ENCODE measurements at regions of chr2 and their contacts with region 1.

Region 1: GRCh38 chr2:60966507-60967405 is 50.8 kb upstream of the PEX13 start:
- DNase-seq: peak; percentile 52
- ATAC-seq: peak; percentile 81
- H3K4me3 ChIP-seq: peak overlapping the region; percentile 41; the same call in 1 of the 2 replicates
- H3K27ac ChIP-seq: peak overlapping the region; percentile 92
- H3K4me1 ChIP-seq: peaks cover 35% of the 10 kb centered on the region
- H3K27me3 ChIP-seq: no peaks in the 10 kb centered on the region
- CTCF ChIP-seq: no peak
- EP300 ChIP-seq: peak; percentile 77 to 79; a peak in 3 of 4 replicates
- POLR2A ChIP-seq: no peak
- RAD21 ChIP-seq: no peak

Region 2: DNA sequence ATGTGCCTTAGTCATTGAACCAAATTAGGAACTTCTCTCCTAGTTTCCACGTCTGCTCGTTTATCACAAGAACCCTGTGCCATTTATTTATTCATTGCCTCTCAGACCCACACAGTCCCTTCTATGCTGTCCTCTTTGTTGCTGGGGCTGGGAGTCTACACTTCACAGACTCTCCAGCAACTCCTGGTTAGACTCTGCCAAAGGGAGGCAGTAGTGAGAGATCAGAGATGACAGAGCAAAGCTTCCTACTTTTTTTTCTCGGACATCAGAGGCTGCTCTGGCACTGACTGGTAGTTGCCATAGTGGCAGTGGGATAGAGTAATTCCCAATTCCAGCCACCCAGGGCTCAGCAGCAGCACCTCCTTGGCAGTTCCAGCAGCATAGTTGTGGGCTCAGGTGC is 690.8 kb before region 1 on chr2:
- CTCF ChIA-PET with region 1: no interaction called
- POLR2A ChIA-PET with region 1: no interaction called
- RAD21 ChIA-PET with region 1: no interaction called
- SMC1A ChIA-PET with region 1: no interaction called
- in situ Hi-C with region 1: no loop called
- intact Hi-C with region 1: no loop called
- DNase-seq: no peak
- ATAC-seq: no peak
- H3K4me3 ChIP-seq: no peak overlapping the region
- H3K27ac ChIP-seq: no peak overlapping the region
- H3K4me1 ChIP-seq: no peaks in the 10 kb centered on the region
- H3K27me3 ChIP-seq: no peaks in the 10 kb centered on the region; a peak in 1 of 4 replicates
- CTCF ChIP-seq: no peak
- EP300 ChIP-seq: no peak
- POLR2A ChIP-seq: no peak
- RAD21 ChIP-seq: no peak

Region 3: DNA sequence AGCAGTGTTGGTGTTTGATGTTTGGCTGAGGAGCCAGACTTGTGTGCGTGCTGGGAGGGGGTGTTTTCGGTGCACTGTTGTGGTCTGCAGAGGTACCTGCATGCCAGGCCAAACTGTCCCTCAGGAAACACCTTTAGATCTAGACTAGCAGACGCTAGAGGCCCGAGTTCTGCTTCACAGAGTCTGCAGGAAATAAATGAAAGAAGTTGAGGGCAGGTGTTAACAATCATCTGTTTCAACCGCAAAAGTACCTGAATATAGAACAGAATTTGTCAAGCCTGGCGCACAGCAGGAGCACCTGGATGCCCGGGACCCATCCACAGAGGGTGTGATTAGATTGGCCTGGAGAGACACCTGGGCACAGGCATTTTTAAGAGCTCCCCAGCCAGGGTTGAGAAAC is 125.9 kb before region 1 on chr2:
- CTCF ChIA-PET with region 1: interaction called, 6 read pairs
- POLR2A ChIA-PET with region 1: no interaction called
- RAD21 ChIA-PET with region 1: interaction called, 6 read pairs
- SMC1A ChIA-PET with region 1: interaction called, 31 read pairs
- in situ Hi-C with region 1: no loop called
- intact Hi-C with region 1: no loop called
- DNase-seq: peak; percentile 86
- ATAC-seq: peak; percentile 63
- H3K4me3 ChIP-seq: peak overlapping the region; percentile 38; the same call in 1 of the 2 replicates
- H3K27ac ChIP-seq: peak overlapping the region; percentile 92
- H3K4me1 ChIP-seq: peaks cover 91% of the 10 kb centered on the region
- H3K27me3 ChIP-seq: no peaks in the 10 kb centered on the region
- CTCF ChIP-seq: no peak
- EP300 ChIP-seq: peak; percentile 30 to 54; a peak in 1 of 4 replicates
- POLR2A ChIP-seq: no peak
- RAD21 ChIP-seq: 0 out of 2 replicates have a peak, but pooled peaks have one; percentile 17

Region 4: DNA sequence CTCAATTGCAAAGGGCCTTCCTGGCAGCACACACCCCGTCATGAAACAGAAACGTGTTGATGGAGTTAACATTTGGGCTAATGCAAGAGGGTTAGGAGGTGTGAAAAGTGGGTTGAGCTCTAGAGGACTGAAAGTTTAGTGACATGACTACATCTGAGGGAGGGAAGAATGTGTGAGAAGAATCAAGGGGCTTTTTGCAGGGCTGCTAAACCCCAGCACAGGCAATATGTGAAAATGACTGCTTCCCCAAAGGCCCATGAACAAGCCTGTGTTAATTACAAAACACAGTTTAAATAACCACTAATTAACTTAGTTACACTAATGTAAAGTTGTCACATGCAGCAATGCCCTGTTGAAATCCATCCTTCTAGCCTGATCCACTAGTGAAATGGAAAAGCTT is 12.6 kb before region 1 on chr2:
- CTCF ChIA-PET with region 1: interaction called, 6 read pairs
- POLR2A ChIA-PET with region 1: interaction called, 44 read pairs
- RAD21 ChIA-PET with region 1: interaction called, 45 read pairs
- SMC1A ChIA-PET with region 1: interaction called, 108 read pairs
- in situ Hi-C with region 1: no loop called
- intact Hi-C with region 1: no loop called
- DNase-seq: peak; percentile 40
- ATAC-seq: peak; percentile 94
- H3K4me3 ChIP-seq: no peak overlapping the region
- H3K27ac ChIP-seq: no peak overlapping the region
- H3K4me1 ChIP-seq: no peaks in the 10 kb centered on the region
- H3K27me3 ChIP-seq: no peaks in the 10 kb centered on the region
- CTCF ChIP-seq: no peak
- EP300 ChIP-seq: peak; percentile 45 to 79; a peak in 3 of 4 replicates
- POLR2A ChIP-seq: no peak
- RAD21 ChIP-seq: no peak

Region 5: DNA sequence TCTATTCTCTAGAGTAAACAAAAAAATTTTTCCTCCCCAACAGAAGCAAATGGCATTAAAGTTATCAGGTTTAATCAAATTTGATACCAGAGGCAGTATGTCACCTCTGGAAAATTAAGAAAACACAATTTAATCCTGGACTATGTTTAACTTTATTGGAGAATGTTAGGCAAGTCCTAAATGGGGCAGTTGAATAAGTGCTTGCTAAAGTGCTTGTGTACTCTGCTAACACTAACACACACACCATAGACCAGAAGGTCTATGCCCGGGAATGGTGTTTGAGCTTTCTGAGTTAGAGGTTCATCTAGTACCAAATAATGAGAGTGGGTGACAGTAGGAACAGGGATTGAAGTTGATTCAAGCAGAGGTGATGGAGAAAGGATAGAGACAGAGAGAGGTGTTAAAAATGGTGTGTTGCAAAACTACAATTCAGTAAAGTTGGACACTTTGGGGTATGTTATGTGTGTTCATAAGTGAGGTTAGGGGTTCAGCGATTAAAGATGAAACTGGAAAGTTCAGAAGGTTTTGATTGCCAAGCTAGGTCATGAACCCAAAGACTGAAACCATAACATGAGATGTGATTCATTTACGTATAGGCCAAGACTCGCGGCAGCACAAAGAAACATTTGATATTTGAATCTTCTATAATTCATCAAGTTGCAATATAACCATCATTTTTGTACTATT is 10.3 kb after region 1 on chr2:
- CTCF ChIA-PET with region 1: no interaction called
- POLR2A ChIA-PET with region 1: interaction called, 5 read pairs
- RAD21 ChIA-PET with region 1: interaction called, 15 read pairs
- SMC1A ChIA-PET with region 1: interaction called, 10 read pairs
- in situ Hi-C with region 1: no loop called
- intact Hi-C with region 1: no loop called
- DNase-seq: no peak
- ATAC-seq: peak; percentile 66
- H3K4me3 ChIP-seq: no peak overlapping the region; the same call in 1 of the 2 replicates
- H3K27ac ChIP-seq: no peak overlapping the region
- H3K4me1 ChIP-seq: peaks cover 56% of the 10 kb centered on the region
- H3K27me3 ChIP-seq: no peaks in the 10 kb centered on the region
- CTCF ChIP-seq: no peak
- EP300 ChIP-seq: 0 out of 4 replicates have a peak, but pooled peaks of 1 of the 2 experiments have one; percentile 6
- POLR2A ChIP-seq: no peak
- RAD21 ChIP-seq: no peak

Region 6: DNA sequence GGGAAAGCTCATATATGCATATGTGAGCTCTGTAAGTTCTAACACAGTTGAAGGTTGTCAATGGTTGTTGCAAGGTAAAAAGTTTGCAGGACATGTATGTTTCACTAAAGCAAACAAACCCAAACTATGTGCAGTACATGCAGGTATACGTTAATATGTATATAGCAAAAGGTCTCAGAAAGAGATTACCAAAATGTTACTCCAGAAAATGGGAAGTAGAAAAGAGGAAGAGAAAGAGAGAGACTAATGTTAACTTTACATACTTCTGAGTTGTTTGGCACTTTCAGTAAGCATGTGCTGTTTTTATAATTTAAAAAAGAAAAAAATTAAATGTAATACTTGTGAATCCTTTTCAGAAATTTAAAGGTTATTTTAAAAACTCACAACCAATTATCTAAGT is 18.0 kb after region 1 on chr2:
- CTCF ChIA-PET with region 1: interaction called, 4 read pairs
- POLR2A ChIA-PET with region 1: interaction called, 7 read pairs
- RAD21 ChIA-PET with region 1: interaction called, 11 read pairs
- SMC1A ChIA-PET with region 1: interaction called, 76 read pairs
- in situ Hi-C with region 1: no loop called
- intact Hi-C with region 1: no loop called
- DNase-seq: no peak
- ATAC-seq: peak; percentile 76
- H3K4me3 ChIP-seq: no peak overlapping the region
- H3K27ac ChIP-seq: peak overlapping the region; percentile 12
- H3K4me1 ChIP-seq: peaks cover 26% of the 10 kb centered on the region
- H3K27me3 ChIP-seq: no peaks in the 10 kb centered on the region
- CTCF ChIP-seq: no peak
- EP300 ChIP-seq: no peak
- POLR2A ChIP-seq: no peak
- RAD21 ChIP-seq: no peak

Region 7: DNA sequence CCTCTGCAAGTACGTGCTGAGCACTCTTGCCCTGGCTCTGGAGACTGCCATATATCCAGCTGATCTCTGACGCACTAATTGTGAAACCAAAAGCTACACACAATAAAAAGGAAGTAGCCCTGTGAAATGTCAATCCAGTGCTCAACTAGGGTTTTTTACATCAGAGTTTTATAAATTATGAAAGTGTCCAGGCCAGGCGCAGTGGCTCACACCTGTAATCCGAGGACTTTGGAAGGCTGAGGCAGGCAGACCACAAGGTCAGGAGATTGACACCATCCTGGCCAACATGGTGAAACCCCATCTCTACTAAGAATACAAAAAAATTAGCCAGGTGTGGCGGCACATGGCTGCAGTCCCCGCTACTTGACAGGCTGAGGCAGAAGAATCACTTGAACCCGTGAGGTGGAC is 26.2 kb after region 1 on chr2:
- CTCF ChIA-PET with region 1: interaction called, 10 read pairs
- POLR2A ChIA-PET with region 1: interaction called, 7 read pairs
- RAD21 ChIA-PET with region 1: interaction called, 23 read pairs
- SMC1A ChIA-PET with region 1: interaction called, 76 read pairs
- in situ Hi-C with region 1: no loop called
- intact Hi-C with region 1: loop called (anchors 1 kb)
- DNase-seq: peak; percentile 83
- ATAC-seq: peak; percentile 99
- H3K4me3 ChIP-seq: no peak overlapping the region
- H3K27ac ChIP-seq: peak overlapping the region; percentile 41
- H3K4me1 ChIP-seq: peaks cover 7% of the 10 kb centered on the region
- H3K27me3 ChIP-seq: no peaks in the 10 kb centered on the region
- CTCF ChIP-seq: no peak
- EP300 ChIP-seq: peak; percentile 82 to 93
- POLR2A ChIP-seq: no peak
- RAD21 ChIP-seq: no peak